ENCODE measurements at regions of chr18 and their contacts with region 1.

Region 1: GRCh38 chr18:68114989-68115388 is 598.5 kb upstream of the DSEL start:
- DNase-seq: no peak
- H3K4me3 Mint-ChIP-seq: no peak overlapping the region
- H3K27ac Mint-ChIP-seq: no peak overlapping the region
- H3K4me1 Mint-ChIP-seq: no peaks in the 10 kb centered on the region
- H3K27me3 Mint-ChIP-seq: no peaks in the 10 kb centered on the region

Region 2: DNA sequence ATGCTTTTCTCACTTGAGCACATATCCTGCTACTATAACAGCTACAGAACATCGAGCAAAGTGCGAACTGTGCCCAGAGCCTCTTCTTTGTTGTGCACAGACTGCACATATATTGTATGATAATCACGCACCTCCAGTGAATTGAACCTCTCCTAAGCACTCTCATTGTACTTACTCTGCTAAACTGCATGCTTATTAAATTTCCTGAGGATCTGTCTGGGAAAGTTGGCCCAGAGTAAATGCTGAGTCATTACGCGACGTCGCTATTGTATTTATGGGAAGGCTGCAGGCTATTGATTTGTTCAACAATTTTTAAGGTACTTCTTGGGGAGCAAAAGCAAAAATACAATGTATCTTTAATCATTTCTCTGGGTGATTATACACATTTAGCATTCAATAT is 198.9 kb before region 1 on chr18:
- intact Hi-C with region 1: no loop called
- DNase-seq: no peak
- H3K4me3 Mint-ChIP-seq: no peak overlapping the region
- H3K27ac Mint-ChIP-seq: no peak overlapping the region
- H3K4me1 Mint-ChIP-seq: no peaks in the 10 kb centered on the region
- H3K27me3 Mint-ChIP-seq: no peaks in the 10 kb centered on the region

Region 3: DNA sequence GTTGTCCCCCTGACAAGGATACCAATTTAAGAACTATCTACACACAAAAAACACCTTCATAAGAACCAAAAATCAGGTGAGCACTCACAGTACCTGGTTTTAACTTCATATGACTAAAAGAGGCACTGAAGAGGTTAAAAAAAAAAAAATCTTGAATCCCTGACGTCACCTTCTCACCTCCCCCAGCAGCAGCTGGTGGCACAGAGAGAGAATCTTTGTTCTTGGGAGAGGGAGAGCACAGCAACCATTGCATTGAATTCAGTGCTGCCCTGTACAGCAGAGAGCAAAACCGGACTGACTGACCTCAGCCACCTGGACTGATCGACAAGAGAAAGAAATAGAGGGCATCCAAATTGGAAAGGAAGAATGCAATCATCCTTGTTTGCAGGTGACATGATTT is 33.9 kb after region 1 on chr18:
- intact Hi-C with region 1: no loop called
- DNase-seq: no peak
- H3K4me3 Mint-ChIP-seq: no peak overlapping the region
- H3K27ac Mint-ChIP-seq: no peak overlapping the region
- H3K4me1 Mint-ChIP-seq: no peaks in the 10 kb centered on the region
- H3K27me3 Mint-ChIP-seq: no peaks in the 10 kb centered on the region

Region 4: GRCh38 chr18:68177807-68178702 is 63.1 kb after region 1 on chr18:
- intact Hi-C with region 1: loop called (anchors 10 kb)
- DNase-seq: no peak
- H3K4me3 Mint-ChIP-seq: no peak overlapping the region
- H3K27ac Mint-ChIP-seq: no peak overlapping the region
- H3K4me1 Mint-ChIP-seq: no peaks in the 10 kb centered on the region
- H3K27me3 Mint-ChIP-seq: no peaks in the 10 kb centered on the region